CD8-positive, alpha-beta T cell (primary cell): ENCODE measurements at regions of chr1 and their contacts with region 1.

Region 1: GRCh38 chr1:39196244-39197215 is 8.0 kb upstream of the MACF1 start:
- DNase-seq: peak in 8 of 9 experiments; percentile 26 to 90 (median 70)
- ATAC-seq: peak; percentile 68
- H3K4me3 ChIP-seq: peak overlapping the region; percentile 4 to 9
- H3K4me3 Mint-ChIP-seq: peak overlapping the region; percentile 68
- H3K27ac ChIP-seq: peak overlapping the region; percentile 48 to 84
- H3K27ac Mint-ChIP-seq: peak overlapping the region; percentile 91
- H3K4me1 ChIP-seq: peaks cover 63% of the 10 kb centered on the region
- H3K4me1 Mint-ChIP-seq: peaks cover 80% of the 10 kb centered on the region
- H3K27me3 ChIP-seq: no peaks in the 10 kb centered on the region
- H3K27me3 Mint-ChIP-seq: no peaks in the 10 kb centered on the region
- CTCF ChIP-seq: no peak

Region 2: GRCh38 chr1:39098546-39099250 is 97.8 kb before region 1 on chr1:
- CTCF ChIA-PET with region 1: interaction called, 84 read pairs
- POLR2A ChIA-PET with region 1: no interaction called
- intact Hi-C with region 1: loop called in 1 of 2 experiments (anchors 1 kb)
- DNase-seq: peak; percentile 18 to 87 (median 61)
- ATAC-seq: peak; percentile 77
- H3K4me3 ChIP-seq: no peak overlapping the region
- H3K4me3 Mint-ChIP-seq: no peak overlapping the region
- H3K27ac ChIP-seq: no peak overlapping the region
- H3K27ac Mint-ChIP-seq: no peak overlapping the region
- H3K4me1 ChIP-seq: peaks cover 14% of the 10 kb centered on the region
- H3K4me1 Mint-ChIP-seq: peaks cover 21% of the 10 kb centered on the region
- H3K27me3 ChIP-seq: no peaks in the 10 kb centered on the region
- H3K27me3 Mint-ChIP-seq: no peaks in the 10 kb centered on the region
- CTCF ChIP-seq: peak; percentile 54

Region 3: GRCh38 chr1:39214998-39215873 is 18.7 kb after region 1 on chr1:
- CTCF ChIA-PET with region 1: interaction called, 133 read pairs
- POLR2A ChIA-PET with region 1: interaction called, 35 read pairs
- intact Hi-C with region 1: loop called (anchors 1 to 2 kb)
- DNase-seq: peak in 7 of 9 experiments; percentile 20 to 73 (median 58)
- ATAC-seq: peak; percentile 75
- H3K4me3 ChIP-seq: peak overlapping the region; percentile 54 to 64
- H3K4me3 Mint-ChIP-seq: peak overlapping the region; percentile 89
- H3K27ac ChIP-seq: peak overlapping the region; percentile 34 to 81
- H3K27ac Mint-ChIP-seq: peak overlapping the region; percentile 92
- H3K4me1 ChIP-seq: peaks cover 48% of the 10 kb centered on the region
- H3K4me1 Mint-ChIP-seq: peaks cover 61% of the 10 kb centered on the region
- H3K27me3 ChIP-seq: no peaks in the 10 kb centered on the region
- H3K27me3 Mint-ChIP-seq: no peaks in the 10 kb centered on the region
- CTCF ChIP-seq: no peak

Region 4: DNA sequence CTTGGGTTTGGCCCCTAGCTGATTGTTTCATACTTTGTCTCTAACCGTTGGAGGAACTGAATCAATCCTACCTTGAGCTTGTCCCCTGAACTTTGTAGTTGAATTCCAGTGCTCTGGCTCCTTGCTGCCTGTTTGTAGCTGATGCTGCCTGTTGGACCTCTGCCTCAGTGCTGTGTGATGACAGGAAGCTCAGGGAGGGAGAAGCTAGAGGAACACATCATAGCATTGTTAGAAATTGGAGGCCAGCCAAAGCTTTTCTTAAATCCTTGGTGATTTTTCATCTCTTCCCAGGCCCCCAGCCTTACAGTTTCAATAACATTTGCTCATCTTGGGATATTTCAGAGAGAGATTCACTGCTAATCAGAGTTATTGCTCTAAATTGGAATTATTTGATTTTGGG is 41.9 kb after region 1 on chr1:
- CTCF ChIA-PET with region 1: interaction called, 622 read pairs
- POLR2A ChIA-PET with region 1: no interaction called
- intact Hi-C with region 1: loop called in 1 of 2 experiments (anchors 5 kb)
- DNase-seq: no peak
- ATAC-seq: no peak
- H3K4me3 ChIP-seq: no peak overlapping the region
- H3K4me3 Mint-ChIP-seq: no peak overlapping the region
- H3K27ac ChIP-seq: peak overlapping the region in 1 of 2 experiments; percentile 0
- H3K27ac Mint-ChIP-seq: peak overlapping the region; percentile 80
- H3K4me1 ChIP-seq: peaks cover 10% of the 10 kb centered on the region
- H3K4me1 Mint-ChIP-seq: peaks cover 60% of the 10 kb centered on the region
- H3K27me3 ChIP-seq: no peaks in the 10 kb centered on the region
- H3K27me3 Mint-ChIP-seq: no peaks in the 10 kb centered on the region
- CTCF ChIP-seq: no peak

Region 5: DNA sequence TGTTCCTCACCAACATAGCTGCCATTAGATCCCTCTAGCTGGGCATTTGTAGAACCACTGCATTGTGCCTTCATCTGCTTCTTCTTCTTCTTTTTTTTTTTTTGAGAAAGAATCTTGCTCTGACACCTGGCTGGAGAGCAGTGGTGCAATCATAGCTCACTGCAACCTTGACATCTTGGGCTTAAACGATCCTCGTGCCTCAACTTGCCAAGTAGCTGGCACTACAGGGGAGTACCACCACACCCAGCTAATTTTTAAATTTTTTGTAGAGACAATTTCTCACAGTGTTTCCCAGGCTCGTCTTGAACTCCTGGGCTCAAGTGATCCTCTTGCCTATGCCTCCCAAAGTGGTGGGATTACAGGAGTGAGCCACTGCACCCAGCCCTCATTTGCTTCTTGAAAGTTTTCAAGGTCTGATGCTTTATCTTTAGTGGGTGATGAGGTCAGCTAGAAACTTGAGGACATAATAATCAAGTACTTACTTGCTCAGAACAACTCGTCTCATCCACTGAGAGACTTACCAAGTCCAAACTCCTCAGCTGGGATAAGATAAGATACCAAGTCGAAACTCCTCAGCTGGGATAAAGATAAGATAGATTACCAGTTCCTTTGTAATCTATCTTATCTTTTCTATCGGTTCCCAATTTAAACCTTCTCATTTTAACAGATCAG is 79.4 kb after region 1 on chr1:
- CTCF ChIA-PET with region 1: interaction called, 32 read pairs
- POLR2A ChIA-PET with region 1: interaction called, 4 read pairs
- intact Hi-C with region 1: no loop called
- DNase-seq: no peak
- ATAC-seq: no peak
- H3K4me3 ChIP-seq: no peak overlapping the region
- H3K4me3 Mint-ChIP-seq: no peak overlapping the region
- H3K27ac ChIP-seq: no peak overlapping the region
- H3K27ac Mint-ChIP-seq: peak overlapping the region; percentile 57
- H3K4me1 ChIP-seq: peaks cover 10% of the 10 kb centered on the region
- H3K4me1 Mint-ChIP-seq: peaks cover 61% of the 10 kb centered on the region
- H3K27me3 ChIP-seq: no peaks in the 10 kb centered on the region
- H3K27me3 Mint-ChIP-seq: no peaks in the 10 kb centered on the region
- CTCF ChIP-seq: no peak

Region 6: GRCh38 chr1:39538588-39539465 is 342.3 kb after region 1 on chr1:
- CTCF ChIA-PET with region 1: interaction called, 12 read pairs
- POLR2A ChIA-PET with region 1: no interaction called
- intact Hi-C with region 1: no loop called
- DNase-seq: peak in 8 of 9 experiments; percentile 16 to 71 (median 43)
- ATAC-seq: peak; percentile 67
- H3K4me3 ChIP-seq: no peak overlapping the region
- H3K4me3 Mint-ChIP-seq: no peak overlapping the region
- H3K27ac ChIP-seq: no peak overlapping the region
- H3K27ac Mint-ChIP-seq: no peak overlapping the region
- H3K4me1 ChIP-seq: no peaks in the 10 kb centered on the region
- H3K4me1 Mint-ChIP-seq: no peaks in the 10 kb centered on the region
- H3K27me3 ChIP-seq: no peaks in the 10 kb centered on the region
- H3K27me3 Mint-ChIP-seq: no peaks in the 10 kb centered on the region
- CTCF ChIP-seq: peak; percentile 77